Psoas muscle (tissue), 8 donors: ENCODE measurements at regions of chr16 and their contacts with region 1.

Region 1: DNA sequence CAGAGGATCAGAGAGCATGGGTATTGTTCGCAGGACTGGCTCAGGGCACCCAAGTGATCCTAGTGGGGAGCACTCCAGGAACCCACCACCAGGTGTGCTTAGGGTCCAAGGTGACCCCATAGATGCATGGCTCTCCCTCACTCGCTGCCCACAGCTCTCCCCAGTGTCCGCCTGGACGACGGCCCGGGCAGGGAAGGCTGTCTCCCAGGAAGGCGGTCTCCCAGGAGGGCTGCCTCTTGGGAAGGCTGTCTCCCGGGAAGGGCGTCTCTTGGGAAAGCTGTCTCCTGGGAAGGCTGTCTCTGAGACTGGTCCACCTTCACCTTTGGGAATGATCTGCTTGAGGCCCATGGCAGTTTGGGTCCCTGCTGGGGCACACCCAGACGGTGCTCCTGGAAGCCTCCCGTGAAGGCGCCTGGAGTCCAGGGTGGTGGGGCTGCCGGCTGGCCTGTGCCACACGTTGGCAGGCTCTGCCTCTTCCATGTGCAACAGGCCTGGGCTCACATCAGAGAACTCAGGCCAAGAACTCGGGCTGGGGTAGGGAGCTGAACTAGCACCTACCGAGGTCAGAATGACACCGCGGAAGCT is 5.0 kb downstream of the ECI1 start:
- DNase-seq: peak in 1 of 2 donors; percentile 26
- ATAC-seq: no peak
- H3K4me3 ChIP-seq: no peak overlapping the region
- H3K27ac ChIP-seq: no peak overlapping the region
- H3K4me1 ChIP-seq: peaks cover 10% of the 10 kb centered on the region
- H3K27me3 ChIP-seq: no peaks in the 10 kb centered on the region
- CTCF ChIP-seq: no peak

Region 2: DNA sequence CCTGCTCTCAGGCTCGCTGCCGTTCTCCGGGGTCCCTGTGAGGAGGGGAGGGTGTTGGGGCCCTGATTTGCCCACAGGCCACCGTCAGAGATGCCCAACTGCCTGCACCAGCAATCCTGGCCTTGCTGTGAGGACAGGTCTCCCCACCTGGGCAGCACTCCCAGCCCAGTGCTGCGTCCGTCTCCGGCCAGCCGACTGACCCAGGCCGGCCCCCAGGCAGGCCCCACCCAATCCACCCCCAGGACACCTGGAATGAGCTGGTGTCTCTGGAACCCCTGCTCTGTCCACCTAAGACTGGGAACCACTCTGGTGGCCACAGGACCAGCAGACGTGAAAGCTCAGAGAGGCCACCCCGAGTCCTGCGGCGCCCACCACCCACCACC is 130.8 kb before region 1 on chr16:
- intact Hi-C with region 1: no loop called
- DNase-seq: no peak
- ATAC-seq: no peak
- H3K4me3 ChIP-seq: no peak overlapping the region
- H3K27ac ChIP-seq: no peak overlapping the region
- H3K4me1 ChIP-seq: peaks cover 4% of the 10 kb centered on the region
- H3K27me3 ChIP-seq: no peaks in the 10 kb centered on the region
- CTCF ChIP-seq: no peak

Region 3: GRCh38 chr16:2226245-2226793 is 20.1 kb before region 1 on chr16:
- intact Hi-C with region 1: loop called (anchors 2 kb)
- DNase-seq: no peak
- ATAC-seq: no peak
- H3K4me3 ChIP-seq: no peak overlapping the region
- H3K27ac ChIP-seq: peak overlapping the region; percentile 30
- H3K4me1 ChIP-seq: peaks cover 19% of the 10 kb centered on the region
- H3K27me3 ChIP-seq: no peaks in the 10 kb centered on the region
- CTCF ChIP-seq: no peak

Region 4: GRCh38 chr16:2288726-2289125 is 42.3 kb after region 1 on chr16:
- intact Hi-C with region 1: no loop called
- DNase-seq: no peak
- ATAC-seq: no peak
- H3K4me3 ChIP-seq: no peak overlapping the region
- H3K27ac ChIP-seq: no peak overlapping the region
- H3K4me1 ChIP-seq: no peaks in the 10 kb centered on the region
- H3K27me3 ChIP-seq: no peaks in the 10 kb centered on the region
- CTCF ChIP-seq: no peak